Activated B cell treated with CpG ODN at 0.5 μM for 24 hours (primary cell): ENCODE measurements at regions of chr3 and their contacts with region 1.

Region 1: DNA sequence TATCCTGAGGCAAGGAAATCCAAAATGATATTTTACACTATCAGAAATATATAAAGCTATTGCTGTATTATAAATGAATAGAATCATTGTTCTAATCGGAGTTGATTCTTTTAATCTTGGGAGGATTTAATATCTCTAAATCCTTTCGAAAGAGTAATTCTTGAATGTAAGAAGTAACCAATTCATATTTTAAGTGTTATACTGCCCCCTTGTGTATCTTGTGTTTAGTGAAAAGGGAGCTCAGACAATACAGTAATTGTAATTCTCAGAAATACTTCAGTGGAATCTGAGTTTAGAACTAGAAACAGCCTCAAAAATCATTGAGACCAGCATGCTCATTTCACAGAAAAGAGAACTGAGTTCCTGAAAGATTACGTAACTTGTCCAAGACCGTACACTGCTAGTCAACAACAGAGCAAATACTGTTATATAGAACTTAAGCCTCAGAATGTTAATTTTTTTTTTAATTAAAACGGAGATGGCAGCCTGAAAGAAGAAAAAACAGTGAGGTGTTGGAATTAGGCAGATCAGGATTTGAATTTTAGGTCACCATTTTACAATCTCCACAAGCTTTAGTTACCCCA is 42.9 kb downstream of the PLCH1 start:
- DNase-seq: no peak
- ATAC-seq: no peak
- H3K4me3 Mint-ChIP-seq: no peak overlapping the region
- H3K27ac Mint-ChIP-seq: no peak overlapping the region
- H3K4me1 Mint-ChIP-seq: no peaks in the 10 kb centered on the region
- H3K27me3 Mint-ChIP-seq: peaks cover 5% of the 10 kb centered on the region
- CTCF ChIP-seq: peak; percentile 72

Region 2: GRCh38 chr3:154334973-154335420 is 1367.0 kb before region 1 on chr3:
- CTCF ChIA-PET with region 1: interaction called, 10 read pairs
- POLR2A ChIA-PET with region 1: no interaction called
- intact Hi-C with region 1: loop called (anchors 1 kb)
- DNase-seq: no peak
- ATAC-seq: no peak
- H3K4me3 Mint-ChIP-seq: no peak overlapping the region
- H3K27ac Mint-ChIP-seq: no peak overlapping the region
- H3K4me1 Mint-ChIP-seq: no peaks in the 10 kb centered on the region
- H3K27me3 Mint-ChIP-seq: peaks cover 5% of the 10 kb centered on the region
- CTCF ChIP-seq: peak; percentile 27

Region 3: GRCh38 chr3:154758109-154758868 is 943.7 kb before region 1 on chr3:
- CTCF ChIA-PET with region 1: no interaction called
- POLR2A ChIA-PET with region 1: no interaction called
- intact Hi-C with region 1: loop called (anchors 5 kb)
- DNase-seq: no peak
- ATAC-seq: no peak
- H3K4me3 Mint-ChIP-seq: no peak overlapping the region
- H3K27ac Mint-ChIP-seq: no peak overlapping the region
- H3K4me1 Mint-ChIP-seq: no peaks in the 10 kb centered on the region
- H3K27me3 Mint-ChIP-seq: no peaks in the 10 kb centered on the region
- CTCF ChIP-seq: no peak

Region 4: DNA sequence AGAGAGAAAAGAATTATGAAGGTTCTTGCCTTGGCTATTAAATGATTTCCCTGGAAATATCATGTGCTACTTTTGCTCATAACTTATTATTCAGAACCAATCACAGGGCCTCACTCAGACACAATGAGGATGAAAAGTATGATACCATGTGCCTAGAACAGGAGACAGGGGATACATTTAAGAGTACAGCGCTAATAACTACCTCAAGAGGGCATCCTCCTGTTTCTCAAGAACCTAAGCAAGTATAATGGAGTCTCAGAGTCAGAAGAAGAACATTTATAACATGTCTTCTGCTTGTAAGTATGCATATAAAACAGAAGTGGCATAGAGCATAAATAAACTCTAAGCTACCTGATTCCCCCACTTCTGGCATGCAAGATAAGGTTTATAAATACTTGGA is 747.2 kb before region 1 on chr3:
- CTCF ChIA-PET with region 1: no interaction called
- POLR2A ChIA-PET with region 1: no interaction called
- intact Hi-C with region 1: loop called (anchors 2 kb)
- DNase-seq: no peak
- ATAC-seq: no peak
- H3K4me3 Mint-ChIP-seq: no peak overlapping the region
- H3K27ac Mint-ChIP-seq: no peak overlapping the region
- H3K4me1 Mint-ChIP-seq: no peaks in the 10 kb centered on the region
- H3K27me3 Mint-ChIP-seq: no peaks in the 10 kb centered on the region
- CTCF ChIP-seq: no peak

Region 5: GRCh38 chr3:155352900-155353490 is 349.0 kb before region 1 on chr3:
- CTCF ChIA-PET with region 1: interaction called, 61 read pairs
- POLR2A ChIA-PET with region 1: no interaction called
- intact Hi-C with region 1: loop called (anchors 1 kb)
- DNase-seq: no peak
- ATAC-seq: no peak
- H3K4me3 Mint-ChIP-seq: no peak overlapping the region
- H3K27ac Mint-ChIP-seq: no peak overlapping the region
- H3K4me1 Mint-ChIP-seq: no peaks in the 10 kb centered on the region
- H3K27me3 Mint-ChIP-seq: peaks cover 2% of the 10 kb centered on the region
- CTCF ChIP-seq: no peak

Region 6: GRCh38 chr3:155411500-155412223 is 290.3 kb before region 1 on chr3:
- CTCF ChIA-PET with region 1: interaction called, 3 read pairs
- POLR2A ChIA-PET with region 1: no interaction called
- intact Hi-C with region 1: loop called (anchors 2 kb)
- DNase-seq: no peak
- ATAC-seq: no peak
- H3K4me3 Mint-ChIP-seq: no peak overlapping the region
- H3K27ac Mint-ChIP-seq: no peak overlapping the region
- H3K4me1 Mint-ChIP-seq: no peaks in the 10 kb centered on the region
- H3K27me3 Mint-ChIP-seq: no peaks in the 10 kb centered on the region
- CTCF ChIP-seq: no peak

Region 7: DNA sequence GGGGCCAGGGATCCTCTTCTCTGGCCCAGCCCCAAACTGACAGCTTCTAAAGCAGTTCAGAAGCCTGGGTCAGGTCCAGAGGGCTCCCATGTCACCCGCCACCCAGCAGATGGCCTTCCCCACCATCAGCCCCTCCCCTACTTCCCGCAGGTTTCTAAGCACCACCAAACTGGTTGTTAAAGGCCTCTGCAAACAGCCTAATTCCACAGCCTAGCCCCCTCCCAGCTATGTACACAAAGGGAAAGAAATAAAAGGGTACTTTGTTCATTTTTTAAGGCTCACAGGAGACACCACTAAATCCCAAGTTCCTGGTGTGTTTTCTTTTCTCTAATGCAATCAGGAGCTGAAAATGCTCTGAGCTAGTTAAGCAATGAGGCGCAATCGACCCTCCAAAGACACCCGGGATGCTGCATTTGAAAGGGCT is 12.3 kb after region 1 on chr3:
- CTCF ChIA-PET with region 1: interaction called, 16 read pairs
- POLR2A ChIA-PET with region 1: interaction called, 3 read pairs
- intact Hi-C with region 1: no loop called
- DNase-seq: no peak
- ATAC-seq: no peak
- H3K4me3 Mint-ChIP-seq: no peak overlapping the region
- H3K27ac Mint-ChIP-seq: no peak overlapping the region
- H3K4me1 Mint-ChIP-seq: no peaks in the 10 kb centered on the region
- H3K27me3 Mint-ChIP-seq: no peaks in the 10 kb centered on the region
- CTCF ChIP-seq: no peak

Region 8: DNA sequence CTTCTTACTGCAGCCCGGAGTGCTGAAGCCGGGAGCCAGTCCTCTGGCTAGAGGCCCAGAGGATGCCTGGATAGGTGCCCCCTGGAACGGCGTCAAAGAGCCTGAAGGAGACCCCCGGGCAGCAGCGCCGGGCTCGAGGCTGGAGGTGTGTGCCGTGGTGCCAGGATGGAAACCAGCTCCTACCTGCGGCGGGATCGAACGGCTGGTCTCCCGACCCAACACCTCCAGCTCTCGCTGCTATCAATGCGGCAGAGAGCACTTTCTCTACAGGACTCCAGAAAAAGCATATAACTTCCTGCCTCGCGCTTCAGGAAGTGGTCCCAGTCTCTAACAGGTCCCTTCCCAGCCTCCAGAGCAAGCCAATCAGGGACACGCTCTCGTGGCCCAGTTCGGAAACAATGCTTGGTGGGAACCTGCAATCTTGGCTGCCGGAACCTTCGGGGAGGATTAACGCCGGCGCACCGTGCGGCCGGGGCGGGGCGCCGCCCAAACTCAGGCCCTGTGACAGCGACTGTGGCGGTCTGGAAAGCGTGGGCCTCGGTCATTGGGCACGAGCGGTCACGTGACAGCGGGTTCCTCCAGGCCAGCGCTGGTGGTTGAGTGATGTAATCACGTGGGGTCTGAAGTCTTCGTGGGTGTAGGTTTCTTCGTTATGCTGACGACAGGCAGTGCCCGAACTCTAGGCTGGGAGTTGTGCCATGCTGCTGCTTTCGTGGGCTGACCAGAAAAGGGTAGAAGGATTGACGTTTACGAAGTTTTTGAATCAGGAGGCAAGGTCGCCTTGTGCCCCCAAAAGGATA is 152.4 kb after region 1 on chr3 and contains the start of gene SLC33A1:
- CTCF ChIA-PET with region 1: no interaction called
- POLR2A ChIA-PET with region 1: no interaction called
- intact Hi-C with region 1: no loop called
- DNase-seq: peak; percentile 97
- ATAC-seq: peak; percentile 91
- H3K4me3 Mint-ChIP-seq: peak within 1 kb of the TSS; percentile 98
- H3K27ac Mint-ChIP-seq: peak within 1 kb of the TSS; percentile 98
- H3K4me1 Mint-ChIP-seq: peaks cover 41% of the 10 kb centered on the region
- H3K27me3 Mint-ChIP-seq: no peaks in the 10 kb centered on the region
- CTCF ChIP-seq: no peak
- total RNA-seq, gene SLC33A1: 19.8 and 23.3 TPM in 2 replicates

Region 9: DNA sequence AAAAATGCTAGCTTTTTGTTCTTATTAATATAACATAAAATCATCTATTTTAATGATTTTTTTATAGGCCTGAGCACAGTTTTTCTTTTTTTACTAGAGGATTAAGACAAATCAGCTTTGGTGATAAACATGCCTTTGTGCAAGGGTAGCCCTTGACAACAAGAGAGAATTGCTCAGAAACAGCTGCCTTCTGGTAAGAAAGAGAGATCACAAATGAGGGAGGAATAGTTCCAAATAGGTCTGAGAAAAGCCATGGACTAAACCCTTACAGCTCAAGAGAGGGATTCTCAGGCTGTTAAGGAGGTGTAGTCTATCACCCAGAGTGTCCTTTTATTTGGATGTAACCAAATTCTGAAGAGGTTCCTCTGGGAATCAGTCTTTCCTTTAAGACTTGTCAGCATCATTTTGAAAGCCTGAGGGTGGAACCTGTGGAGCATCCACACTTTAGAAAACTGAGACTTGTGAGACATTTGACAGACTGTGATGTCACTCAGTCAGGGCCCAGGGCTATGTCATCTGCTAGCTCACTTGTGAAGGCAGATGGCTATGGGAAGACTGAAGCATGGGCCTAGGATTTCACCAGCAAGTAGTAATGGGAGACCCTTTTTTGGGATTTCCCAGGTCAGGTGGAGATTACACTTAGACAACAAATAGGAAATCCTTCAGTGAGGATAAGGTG is 315.5 kb after region 1 on chr3:
- CTCF ChIA-PET with region 1: no interaction called
- POLR2A ChIA-PET with region 1: no interaction called
- intact Hi-C with region 1: no loop called
- DNase-seq: no peak
- ATAC-seq: no peak
- H3K4me3 Mint-ChIP-seq: no peak overlapping the region
- H3K27ac Mint-ChIP-seq: no peak overlapping the region
- H3K4me1 Mint-ChIP-seq: no peaks in the 10 kb centered on the region
- H3K27me3 Mint-ChIP-seq: peaks cover 4% of the 10 kb centered on the region
- CTCF ChIP-seq: no peak